Endothelial cell of umbilical vein (primary cell): ENCODE measurements at regions of chr12 and their contacts with region 1.

Region 1: GRCh38 chr12:26884765-26885576 is 52.0 kb upstream of the ITPR2 start:
- DNase-seq: peak; percentile 83
- H3K4me3 ChIP-seq: no peak overlapping the region
- H3K27ac ChIP-seq: no peak overlapping the region
- H3K4me1 ChIP-seq: peaks cover 2% of the 10 kb centered on the region
- H3K27me3 ChIP-seq: no peaks in the 10 kb centered on the region
- CTCF ChIP-seq: peak; percentile 88 to 90
- POLR2A ChIP-seq: no peak

Region 2: GRCh38 chr12:26434299-26435068 is 450.5 kb before region 1 on chr12:
- CTCF ChIA-PET with region 1: no interaction called
- POLR2A ChIA-PET with region 1: no interaction called
- dilution Hi-C with region 1: no loop called
- intact Hi-C with region 1: loop called (anchors 10 kb)
- DNase-seq: peak; percentile 69
- H3K4me3 ChIP-seq: no peak overlapping the region
- H3K27ac ChIP-seq: no peak overlapping the region
- H3K4me1 ChIP-seq: no peaks in the 10 kb centered on the region
- H3K27me3 ChIP-seq: no peaks in the 10 kb centered on the region
- CTCF ChIP-seq: peak; percentile 62 to 73
- POLR2A ChIP-seq: no peak

Region 3: GRCh38 chr12:26723379-26724308 is 161.3 kb before region 1 on chr12:
- CTCF ChIA-PET with region 1: interaction called, 15 read pairs
- POLR2A ChIA-PET with region 1: no interaction called
- dilution Hi-C with region 1: no loop called
- intact Hi-C with region 1: no loop called
- DNase-seq: peak; percentile 63
- H3K4me3 ChIP-seq: peak overlapping the region in 1 of 3 experiments; percentile 2
- H3K27ac ChIP-seq: peak overlapping the region; percentile 68
- H3K4me1 ChIP-seq: peaks cover 49% of the 10 kb centered on the region
- H3K27me3 ChIP-seq: no peaks in the 10 kb centered on the region
- CTCF ChIP-seq: no peak
- POLR2A ChIP-seq: no peak

Region 4: DNA sequence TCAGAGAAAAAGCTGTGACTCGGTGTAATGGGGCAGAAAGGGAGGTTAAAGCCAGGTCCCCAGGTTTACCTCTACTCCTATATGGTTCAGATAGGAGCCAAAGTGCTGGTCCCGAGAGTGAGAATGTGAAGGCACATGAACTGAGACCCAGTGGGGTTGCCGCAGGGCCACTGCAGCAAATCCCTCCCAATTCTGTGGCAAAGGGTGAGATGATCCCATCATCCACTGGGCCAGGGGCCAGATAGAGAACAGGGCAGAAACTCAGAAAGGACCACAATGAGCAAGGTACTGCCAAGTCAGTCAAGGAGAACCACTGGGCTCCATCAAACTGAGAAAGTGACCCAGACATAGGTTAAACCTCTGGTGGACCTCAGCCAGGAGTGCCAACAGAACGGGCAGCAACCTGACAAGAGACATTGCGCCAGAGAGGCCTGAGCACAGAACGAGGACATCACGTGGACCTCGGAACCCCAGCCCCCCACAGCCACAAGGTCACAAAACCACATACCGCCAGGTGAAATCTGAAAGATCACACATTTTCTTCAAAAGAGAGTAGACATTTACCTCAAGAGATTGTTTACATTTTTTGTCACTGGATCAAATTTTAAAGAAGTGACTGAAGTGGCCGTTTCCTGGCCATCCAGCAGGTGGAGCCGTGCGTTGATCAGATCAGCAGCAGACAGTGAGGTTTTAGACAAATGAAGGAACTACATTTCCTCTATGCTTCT is 31.5 kb before region 1 on chr12:
- CTCF ChIA-PET with region 1: interaction called, 57 read pairs
- POLR2A ChIA-PET with region 1: interaction called, 3 read pairs
- dilution Hi-C with region 1: no loop called
- intact Hi-C with region 1: loop called (anchors 1 kb)
- DNase-seq: peak; percentile 74
- H3K4me3 ChIP-seq: no peak overlapping the region
- H3K27ac ChIP-seq: no peak overlapping the region
- H3K4me1 ChIP-seq: peaks cover 32% of the 10 kb centered on the region
- H3K27me3 ChIP-seq: no peaks in the 10 kb centered on the region
- CTCF ChIP-seq: peak; percentile 77 to 94
- POLR2A ChIP-seq: no peak

Region 5: GRCh38 chr12:26896913-26897312 is 11.9 kb after region 1 on chr12:
- CTCF ChIA-PET with region 1: interaction called, 16 read pairs
- POLR2A ChIA-PET with region 1: no interaction called
- dilution Hi-C with region 1: no loop called
- intact Hi-C with region 1: no loop called
- DNase-seq: no peak
- H3K4me3 ChIP-seq: no peak overlapping the region
- H3K27ac ChIP-seq: no peak overlapping the region
- H3K4me1 ChIP-seq: no peaks in the 10 kb centered on the region
- H3K27me3 ChIP-seq: no peaks in the 10 kb centered on the region
- CTCF ChIP-seq: no peak
- POLR2A ChIP-seq: no peak